ENCODE measurements at regions of chr4 and their contacts with region 1.

Region 1: DNA sequence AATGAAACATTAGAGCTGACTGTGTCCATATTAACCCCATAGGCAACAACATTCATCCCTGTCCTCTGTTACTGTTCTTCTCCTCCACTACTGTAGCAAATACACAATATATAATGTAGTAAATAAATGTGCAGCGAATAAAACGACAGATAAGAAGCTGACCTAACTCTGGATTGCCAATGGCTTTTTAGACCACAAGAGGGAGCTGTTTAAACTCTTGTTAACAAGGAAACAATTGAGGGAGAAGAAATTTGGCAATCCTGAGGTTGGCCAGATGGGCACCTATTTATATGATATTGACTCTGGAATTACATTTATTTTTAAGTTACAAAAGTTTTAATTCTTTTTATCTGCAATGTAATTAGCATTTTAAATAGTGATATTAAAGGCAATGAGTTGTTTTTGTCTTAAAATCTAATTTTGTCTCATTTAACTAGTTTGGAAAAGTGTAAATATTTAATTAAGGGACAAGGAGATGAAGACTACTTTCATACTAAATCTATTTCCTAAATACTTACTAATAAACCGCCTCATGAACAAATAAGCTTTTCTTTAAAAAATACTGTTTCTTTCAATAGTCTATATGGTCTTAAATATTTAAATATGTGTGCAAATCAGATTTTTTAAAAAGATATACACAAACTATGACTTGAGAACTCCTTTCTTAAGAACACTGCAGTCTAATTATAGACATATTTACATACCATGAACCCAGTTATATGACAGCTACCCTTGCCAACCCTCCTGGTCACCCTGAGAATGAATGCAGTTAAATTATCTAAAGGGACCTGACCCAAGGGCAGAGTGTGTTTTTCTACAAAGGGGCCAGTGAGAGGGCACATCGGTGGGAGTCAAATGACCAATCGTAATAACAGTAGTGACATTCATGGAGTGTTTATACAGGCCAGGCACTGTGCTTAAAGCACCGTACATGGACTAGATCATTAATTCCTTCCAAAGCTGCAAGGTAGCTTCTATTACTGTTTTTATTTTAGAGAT is 52.9 kb upstream of the HPF1 start:
- DNase-seq: peak in 5 of 35 experiments; percentile 12 to 71 (median 17)
- ATAC-seq: no peak
- H3K4me3 ChIP-seq: no peak overlapping the region
- H3K4me3 Mint-ChIP-seq: no peak overlapping the region
- H3K27ac ChIP-seq: no peak overlapping the region
- H3K27ac Mint-ChIP-seq: no peak overlapping the region
- H3K4me1 ChIP-seq: no peaks in the 10 kb centered on the region
- H3K4me1 Mint-ChIP-seq: no peaks in the 10 kb centered on the region
- H3K27me3 ChIP-seq: peaks cover 0 to 3% of the 10 kb centered on the region in 2 experiments
- H3K27me3 Mint-ChIP-seq: peaks cover 5 to 9% of the 10 kb centered on the region in 2 donors

Region 2: DNA sequence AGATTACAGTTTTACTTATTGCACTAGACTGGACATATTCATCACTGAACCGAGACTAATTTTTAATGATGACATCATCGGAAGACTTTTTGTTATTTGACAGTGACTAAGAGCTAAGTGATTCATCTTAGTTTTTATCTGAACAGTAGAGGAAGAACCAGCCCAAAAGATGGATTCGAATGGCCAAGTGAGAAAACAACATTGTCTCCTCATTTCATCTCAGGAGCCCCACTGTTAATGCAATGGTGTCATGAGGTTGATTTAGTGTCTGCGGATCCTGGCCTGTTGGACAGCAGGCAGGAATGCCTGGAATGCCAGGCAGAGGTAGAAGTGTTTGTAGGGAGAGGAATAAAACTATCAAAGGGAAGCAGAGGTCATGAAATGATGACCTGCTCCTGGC is 15.0 kb before region 1 on chr4:
- CTCF ChIA-PET with region 1: interaction called, 3 to 10 read pairs
- POLR2A ChIA-PET with region 1: no interaction called
- DNase-seq: no peak
- ATAC-seq: no peak
- H3K4me3 ChIP-seq: no peak overlapping the region
- H3K4me3 Mint-ChIP-seq: no peak overlapping the region
- H3K27ac ChIP-seq: no peak overlapping the region
- H3K27ac Mint-ChIP-seq: no peak overlapping the region
- H3K4me1 ChIP-seq: peaks cover 0 to 4% of the 10 kb centered on the region in 2 experiments
- H3K4me1 Mint-ChIP-seq: peaks cover 8 to 9% (median 9%) of the 10 kb centered on the region in 3 donors
- H3K27me3 ChIP-seq: peaks cover 5 to 8% of the 10 kb centered on the region in 2 experiments
- H3K27me3 Mint-ChIP-seq: peaks cover 29 to 40% of the 10 kb centered on the region in 2 donors

Region 3: DNA sequence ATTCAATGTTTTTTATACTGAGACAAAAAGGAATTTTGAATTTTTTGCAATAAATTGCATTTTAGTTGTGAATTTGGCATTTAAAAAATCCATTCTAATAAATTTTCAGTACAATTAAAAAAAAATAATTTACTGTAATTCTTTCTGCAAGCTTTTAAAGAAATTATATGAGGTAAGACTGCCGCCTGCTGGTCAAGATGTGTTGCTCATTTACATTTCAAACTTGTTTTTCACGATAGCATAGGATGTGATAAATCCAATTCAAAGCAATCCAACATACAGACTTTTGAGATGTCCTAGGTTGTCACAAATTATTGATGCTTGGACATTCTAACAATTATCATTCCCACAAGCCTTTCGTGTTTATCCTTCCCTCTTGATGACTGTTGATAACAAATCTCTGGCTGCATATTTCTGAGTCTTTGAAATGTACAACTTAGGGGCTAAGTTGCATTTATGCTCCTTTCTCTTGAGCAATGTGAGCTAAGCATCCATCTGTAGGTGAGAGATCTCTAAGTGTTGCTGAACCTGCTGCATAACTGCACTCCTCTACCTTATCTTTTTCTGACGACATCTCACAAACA is 237.2 kb after region 1 on chr4:
- CTCF ChIA-PET with region 1: interaction called, 30 to 58 read pairs
- POLR2A ChIA-PET with region 1: no interaction called
- DNase-seq: peak in 30 of 35 experiments; percentile 11 to 78 (median 46)
- ATAC-seq: no peak
- H3K4me3 ChIP-seq: no peak overlapping the region
- H3K4me3 Mint-ChIP-seq: no peak overlapping the region
- H3K27ac ChIP-seq: no peak overlapping the region
- H3K27ac Mint-ChIP-seq: no peak overlapping the region
- H3K4me1 ChIP-seq: no peaks in the 10 kb centered on the region
- H3K4me1 Mint-ChIP-seq: no peaks in the 10 kb centered on the region
- H3K27me3 ChIP-seq: no peaks in the 10 kb centered on the region
- H3K27me3 Mint-ChIP-seq: no peaks in the 10 kb centered on the region